ENCODE measurements at regions of chr11 and their contacts with region 1.

Region 1: GRCh38 chr11:96054870-96055705 is 131.2 kb upstream of the MTMR2 start:
- DNase-seq: no peak
- H3K4me3 ChIP-seq: no peak overlapping the region
- H3K27ac ChIP-seq: no peak overlapping the region
- H3K27me3 ChIP-seq: no peaks in the 10 kb centered on the region
- CTCF ChIP-seq: peak; percentile 68

Region 2: GRCh38 chr11:95835768-95836488 is 219.2 kb before region 1 on chr11:
- CTCF ChIA-PET with region 1: interaction called, 15 read pairs
- POLR2A ChIA-PET with region 1: no interaction called
- DNase-seq: peak; percentile 93
- H3K4me3 ChIP-seq: no peak overlapping the region
- H3K27ac ChIP-seq: no peak overlapping the region
- H3K27me3 ChIP-seq: no peaks in the 10 kb centered on the region
- CTCF ChIP-seq: peak; percentile 88

Region 3: GRCh38 chr11:95877291-95877690 is 177.8 kb before region 1 on chr11:
- CTCF ChIA-PET with region 1: no interaction called
- POLR2A ChIA-PET with region 1: no interaction called
- DNase-seq: peak; percentile 98
- H3K4me3 ChIP-seq: no peak overlapping the region
- H3K27ac ChIP-seq: peak overlapping the region; percentile 97
- H3K27me3 ChIP-seq: no peaks in the 10 kb centered on the region
- CTCF ChIP-seq: no peak

Region 4: DNA sequence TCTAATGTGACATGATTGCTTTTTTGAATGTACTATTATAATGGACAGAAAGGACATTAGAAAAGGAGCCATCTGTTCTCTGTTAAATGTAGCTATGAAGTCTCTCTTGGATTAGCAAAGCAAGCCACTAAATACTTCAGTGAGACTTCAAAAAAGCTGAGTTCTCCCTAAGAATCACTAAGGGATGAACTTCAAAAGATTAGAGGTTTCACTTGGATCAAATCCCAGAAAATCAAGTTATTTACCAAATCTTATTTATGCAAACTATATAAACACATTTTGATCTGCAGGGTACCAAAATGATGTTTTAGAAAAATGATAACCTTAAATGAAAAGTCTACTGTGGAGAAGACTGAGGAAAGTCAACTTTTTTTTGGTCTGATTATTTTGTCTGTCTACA is 49.1 kb before region 1 on chr11:
- CTCF ChIA-PET with region 1: no interaction called
- POLR2A ChIA-PET with region 1: no interaction called
- DNase-seq: no peak
- H3K4me3 ChIP-seq: no peak overlapping the region
- H3K27ac ChIP-seq: no peak overlapping the region
- H3K27me3 ChIP-seq: no peaks in the 10 kb centered on the region
- CTCF ChIP-seq: no peak

Region 5: DNA sequence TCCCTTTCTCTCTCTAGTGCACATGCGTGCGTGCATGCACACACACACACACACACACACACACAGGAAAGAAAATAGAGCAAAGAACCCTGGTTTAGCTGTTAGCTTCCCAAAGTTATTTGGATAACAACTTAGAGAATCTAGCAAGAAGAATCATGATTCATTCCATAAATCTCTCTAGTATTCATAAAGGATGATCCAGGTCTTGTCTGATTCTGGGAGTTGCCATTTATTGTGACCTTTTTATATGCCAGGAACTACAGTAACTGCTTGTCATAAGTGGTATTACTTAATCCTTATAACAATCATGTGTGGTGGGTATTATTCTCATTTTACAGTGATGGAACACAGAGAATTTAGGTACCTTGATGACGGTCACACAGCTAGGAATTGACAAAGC is 10.3 kb after region 1 on chr11:
- CTCF ChIA-PET with region 1: interaction called, 11 read pairs
- POLR2A ChIA-PET with region 1: no interaction called
- DNase-seq: no peak
- H3K4me3 ChIP-seq: no peak overlapping the region
- H3K27ac ChIP-seq: no peak overlapping the region
- H3K27me3 ChIP-seq: no peaks in the 10 kb centered on the region
- CTCF ChIP-seq: no peak

Region 6: DNA sequence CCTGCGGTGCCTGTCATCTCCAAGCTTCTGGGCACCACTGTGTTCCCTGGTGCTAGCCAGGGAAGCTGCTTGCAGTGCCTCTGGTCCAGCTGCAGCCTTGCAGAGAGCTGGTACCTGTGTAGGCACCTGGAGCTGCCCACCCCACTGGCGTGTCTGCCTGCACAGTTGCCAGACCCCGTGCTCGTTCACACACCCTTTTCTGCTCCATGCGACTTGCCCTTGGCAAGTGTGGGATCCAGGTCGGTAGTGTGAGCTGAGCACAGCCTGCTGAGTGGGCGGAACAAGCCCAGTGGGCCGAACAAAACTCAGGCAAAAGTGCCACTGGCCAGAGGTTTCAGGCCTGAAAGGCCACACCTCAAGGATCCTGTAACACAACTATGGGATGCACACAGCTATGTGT is 15.4 kb after region 1 on chr11:
- CTCF ChIA-PET with region 1: interaction called, 11 read pairs
- POLR2A ChIA-PET with region 1: no interaction called
- DNase-seq: no peak
- H3K4me3 ChIP-seq: no peak overlapping the region
- H3K27ac ChIP-seq: no peak overlapping the region
- H3K27me3 ChIP-seq: no peaks in the 10 kb centered on the region
- CTCF ChIP-seq: no peak

Region 7: GRCh38 chr11:96095884-96096303 is 40.8 kb after region 1 on chr11:
- CTCF ChIA-PET with region 1: no interaction called
- POLR2A ChIA-PET with region 1: no interaction called
- DNase-seq: no peak
- H3K4me3 ChIP-seq: no peak overlapping the region
- H3K27ac ChIP-seq: no peak overlapping the region
- H3K27me3 ChIP-seq: no peaks in the 10 kb centered on the region
- CTCF ChIP-seq: no peak

Region 8: DNA sequence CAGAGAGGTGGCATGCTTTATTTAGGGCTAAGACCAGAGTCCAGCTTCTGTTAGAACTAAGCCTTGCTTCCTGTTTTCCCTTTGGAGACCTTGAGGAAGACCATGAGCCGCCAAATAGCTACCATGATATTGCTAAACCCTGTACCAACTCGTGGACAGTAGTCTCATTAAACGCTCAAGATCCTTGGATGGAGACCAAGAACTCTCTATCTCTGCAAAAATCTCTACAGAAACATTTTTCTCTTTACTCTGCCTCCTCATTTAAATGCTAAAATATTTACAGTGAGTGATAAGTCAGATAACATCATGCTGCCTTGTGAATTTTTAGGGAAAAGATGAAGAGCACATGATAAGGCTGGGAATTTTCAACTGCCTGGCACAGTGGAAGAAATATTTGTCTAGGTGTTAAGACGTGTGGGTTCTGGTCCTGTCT is 90.1 kb after region 1 on chr11:
- CTCF ChIA-PET with region 1: interaction called, 10 read pairs
- POLR2A ChIA-PET with region 1: no interaction called
- DNase-seq: no peak
- H3K4me3 ChIP-seq: no peak overlapping the region
- H3K27ac ChIP-seq: no peak overlapping the region
- H3K27me3 ChIP-seq: no peaks in the 10 kb centered on the region
- CTCF ChIP-seq: no peak

Region 9: GRCh38 chr11:96389720-96390487 is 334.8 kb after region 1 on chr11 and contains the starts of genes CCDC82 and JRKL:
- CTCF ChIA-PET with region 1: interaction called, 41 read pairs
- POLR2A ChIA-PET with region 1: interaction called, 3 read pairs
- DNase-seq: peak; percentile 87
- H3K4me3 ChIP-seq: peak within 1 kb of the TSS; percentile 91
- H3K27ac ChIP-seq: peak within 1 kb of the TSS; percentile 91
- H3K27me3 ChIP-seq: no peaks in the 10 kb centered on the region
- CTCF ChIP-seq: no peak
- polyA plus RNA-seq, gene CCDC82: 11.9 and 20.4 TPM in 2 replicates
- polyA plus RNA-seq, gene JRKL: 8.1 and 11.2 TPM in 2 replicates